ENCODE measurements at regions of chr16 and their contacts with region 1.

Region 1: GRCh38 chr16:58025351-58026138 is at the start of gene MMP15:
- DNase-seq: peak; percentile 56 to 79 (median 69)
- H3K4me3 ChIP-seq: peak within 1 kb of the TSS in 2 of 4 donors; percentile 21 to 72
- H3K27ac ChIP-seq: peak within 1 kb of the TSS in 4 of 5 donors; percentile 31 to 80 (median 60)
- H3K4me1 ChIP-seq: peaks cover 27 to 53% of the 10 kb centered on the region in 2 donors
- H3K27me3 ChIP-seq: no peaks in the 10 kb centered on the region
- CTCF ChIP-seq: no peak
- POLR2A ChIP-seq: peak in 1 of 2 donors; percentile 37
- total RNA-seq, gene MMP15: 5.3 to 11.4 (median 7.3) TPM

Region 2: DNA sequence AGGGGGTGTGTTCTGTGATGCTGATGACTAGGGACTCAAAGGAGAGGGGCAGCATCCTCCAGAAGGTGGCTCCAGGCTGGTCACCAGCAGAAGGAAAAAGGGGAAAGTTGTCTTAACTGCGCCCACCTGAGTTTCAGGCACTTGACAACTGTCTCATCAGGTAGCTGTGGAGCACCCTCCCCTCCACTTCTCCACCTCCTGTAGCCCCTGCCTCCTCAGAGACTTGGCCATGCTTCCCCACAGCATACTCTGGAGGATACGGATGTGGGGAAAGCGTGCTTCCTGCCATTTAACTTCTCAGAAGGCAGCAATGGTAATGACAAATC is 85.7 kb after region 1 on chr16:
- intact Hi-C with region 1: no loop called
- DNase-seq: no peak
- H3K4me3 ChIP-seq: no peak overlapping the region
- H3K27ac ChIP-seq: no peak overlapping the region
- H3K4me1 ChIP-seq: peaks cover 0 to 5% of the 10 kb centered on the region in 2 donors
- H3K27me3 ChIP-seq: no peaks in the 10 kb centered on the region
- CTCF ChIP-seq: no peak
- POLR2A ChIP-seq: no peak

Region 3: DNA sequence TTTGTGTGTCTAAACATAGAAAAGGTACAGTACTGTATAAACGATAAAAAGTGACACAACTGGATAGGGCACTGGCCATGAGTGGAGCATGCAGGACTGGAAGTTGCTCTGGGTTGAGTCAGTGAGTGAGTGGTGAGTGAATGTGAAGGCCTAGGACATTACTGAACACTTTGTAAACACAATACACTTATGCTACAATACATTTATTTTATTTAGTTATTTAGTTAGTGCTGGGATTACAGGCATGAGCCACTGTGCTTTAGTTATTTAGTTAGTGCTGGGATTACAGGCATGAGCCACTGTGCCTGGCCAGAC is 99.0 kb after region 1 on chr16:
- intact Hi-C with region 1: loop called (anchors 2 to 5 kb)
- DNase-seq: peak in 4 of 7 donors; percentile 26 to 38 (median 30)
- H3K4me3 ChIP-seq: no peak overlapping the region
- H3K27ac ChIP-seq: peak overlapping the region in 2 of 5 donors; percentile 9 to 44
- H3K4me1 ChIP-seq: peaks cover 43 to 76% of the 10 kb centered on the region in 2 donors
- H3K27me3 ChIP-seq: no peaks in the 10 kb centered on the region
- CTCF ChIP-seq: no peak
- POLR2A ChIP-seq: no peak

Region 4: DNA sequence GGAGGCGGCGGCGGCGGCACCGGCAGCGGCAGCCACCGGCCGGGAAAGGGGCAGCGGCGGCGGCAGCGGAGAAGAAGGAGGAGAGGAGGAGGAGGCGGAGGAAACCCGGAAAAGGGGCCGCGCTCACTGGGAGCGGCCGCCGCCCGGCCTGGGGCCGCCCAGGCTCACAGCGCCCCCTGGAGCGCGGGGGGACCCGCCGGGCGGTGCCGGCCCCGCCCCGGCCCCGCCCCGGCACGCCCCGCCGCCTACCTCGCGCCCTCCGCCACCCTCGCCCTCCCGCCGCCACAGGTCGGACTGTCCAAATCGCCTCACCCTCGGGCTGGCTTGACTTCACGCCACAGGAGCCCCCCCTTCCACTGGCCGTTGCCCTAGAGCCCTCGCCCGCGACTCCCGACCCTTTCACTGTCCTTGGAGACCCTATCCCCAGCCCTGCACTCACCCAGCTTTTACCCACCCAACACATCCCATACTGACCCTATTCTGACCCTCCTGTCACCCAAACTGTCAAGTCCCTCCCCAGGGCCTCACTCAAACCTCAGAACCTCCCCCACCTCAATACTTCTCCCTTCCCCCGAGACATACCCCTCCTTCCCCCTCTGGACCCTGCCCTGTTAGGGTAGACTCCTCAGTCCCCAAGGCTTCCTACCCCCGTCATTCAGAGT is 172.6 kb after region 1 on chr16 and contains the start of gene CSNK2A2:
- intact Hi-C with region 1: loop called in 1 of 2 experiments (anchors 5 kb)
- DNase-seq: peak; percentile 60 to 74 (median 69)
- H3K4me3 ChIP-seq: peak within 1 kb of the TSS in 3 of 4 donors; percentile 1 to 86 (median 72)
- H3K27ac ChIP-seq: peak within 1 kb of the TSS in 1 of 5 donors; percentile 60
- H3K4me1 ChIP-seq: peaks cover 0 to 18% of the 10 kb centered on the region in 2 donors
- H3K27me3 ChIP-seq: no peaks in the 10 kb centered on the region
- CTCF ChIP-seq: peak in 3 of 6 experiments; percentile 15 to 50 (median 27)
- POLR2A ChIP-seq: peak; percentile 20 to 35
- total RNA-seq, gene CSNK2A2: 18.0 to 76.3 (median 41.1) TPM

Region 5: GRCh38 chr16:58306327-58306726 is 280.8 kb after region 1 on chr16:
- intact Hi-C with region 1: loop called in 1 of 2 experiments (anchors 10 kb)
- DNase-seq: peak in 6 of 7 donors; percentile 27 to 72 (median 56)
- H3K4me3 ChIP-seq: no peak overlapping the region
- H3K27ac ChIP-seq: no peak overlapping the region
- H3K4me1 ChIP-seq: no peaks in the 10 kb centered on the region
- H3K27me3 ChIP-seq: no peaks in the 10 kb centered on the region
- CTCF ChIP-seq: peak; percentile 8 to 51 (median 42)
- POLR2A ChIP-seq: no peak